ENCODE measurements at regions of chr22 and their contacts with region 1.

Region 1: GRCh38 chr22:38843201-38843715 is 570 bp downstream of the NPTXR start:
- DNase-seq: peak; percentile 12 to 79 (median 44)
- ATAC-seq: peak; percentile 86 to 90 (median 88)
- H3K4me3 ChIP-seq: peak overlapping the region in 1 of 2 donors; percentile 53
- H3K4me3 Mint-ChIP-seq: peak overlapping the region in 1 of 3 donors; percentile 87
- H3K27ac ChIP-seq: no peak overlapping the region
- H3K27ac Mint-ChIP-seq: no peak overlapping the region
- H3K4me1 ChIP-seq: peaks cover 0 to 24% of the 10 kb centered on the region in 2 experiments
- H3K4me1 Mint-ChIP-seq: peaks cover 29 to 33% (median 31%) of the 10 kb centered on the region in 3 donors
- H3K27me3 ChIP-seq: peaks cover 6 to 46% of the 10 kb centered on the region in 2 experiments
- H3K27me3 Mint-ChIP-seq: peaks cover 5 to 27% of the 10 kb centered on the region in 2 donors

Region 2: GRCh38 chr22:38740754-38741153 is 102.5 kb before region 1 on chr22:
- CTCF ChIA-PET with region 1: no interaction called
- POLR2A ChIA-PET with region 1: interaction called in 1 of 2 experiments, 10 read pairs
- DNase-seq: no peak
- ATAC-seq: no peak
- H3K4me3 ChIP-seq: no peak overlapping the region
- H3K4me3 Mint-ChIP-seq: no peak overlapping the region
- H3K27ac ChIP-seq: peak overlapping the region; percentile 2
- H3K27ac Mint-ChIP-seq: peak overlapping the region; percentile 75 to 81
- H3K4me1 ChIP-seq: peaks cover 0 to 84% of the 10 kb centered on the region in 2 experiments
- H3K4me1 Mint-ChIP-seq: peaks cover 35 to 70% (median 61%) of the 10 kb centered on the region in 3 donors
- H3K27me3 ChIP-seq: no peaks in the 10 kb centered on the region
- H3K27me3 Mint-ChIP-seq: no peaks in the 10 kb centered on the region